ENCODE measurements at regions of chr1 and their contacts with region 1.

Region 1: DNA sequence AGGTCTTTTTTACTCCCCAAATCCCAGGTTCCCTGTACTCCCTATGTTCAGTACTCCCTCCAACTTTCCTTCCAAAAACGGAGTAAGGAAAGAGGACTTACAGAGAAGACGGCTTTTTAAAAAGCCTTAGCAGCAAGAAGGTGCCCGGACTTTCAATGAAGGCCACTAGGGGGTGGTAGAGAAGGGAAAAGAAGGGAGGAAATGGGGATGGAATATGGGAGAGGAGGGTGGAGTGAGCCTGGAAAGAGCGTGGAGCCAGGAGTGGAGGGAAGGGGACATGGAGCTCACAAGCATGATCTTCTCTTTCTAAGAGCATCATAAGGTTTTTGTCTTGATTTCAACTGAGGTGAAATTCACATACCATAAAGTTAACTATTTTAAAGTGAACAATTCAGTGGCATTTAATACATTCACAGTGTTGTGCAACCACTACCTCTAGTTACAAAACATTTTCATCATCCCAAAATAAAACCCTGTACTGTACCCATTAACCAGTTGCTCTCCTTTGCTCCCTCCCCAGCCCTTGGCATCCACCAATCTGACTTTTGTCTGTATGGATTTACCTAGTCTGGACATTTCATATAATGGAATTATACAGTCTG is 129.9 kb downstream of the ZNF281 start:
- DNase-seq: no peak
- H3K4me3 ChIP-seq: no peak overlapping the region
- H3K27ac ChIP-seq: no peak overlapping the region
- H3K4me1 ChIP-seq: no peaks in the 10 kb centered on the region
- H3K27me3 ChIP-seq: no peaks in the 10 kb centered on the region
- CTCF ChIP-seq: peak in 2 of 3 experiments; percentile 34 to 61
- POLR2A ChIP-seq: no peak

Region 2: DNA sequence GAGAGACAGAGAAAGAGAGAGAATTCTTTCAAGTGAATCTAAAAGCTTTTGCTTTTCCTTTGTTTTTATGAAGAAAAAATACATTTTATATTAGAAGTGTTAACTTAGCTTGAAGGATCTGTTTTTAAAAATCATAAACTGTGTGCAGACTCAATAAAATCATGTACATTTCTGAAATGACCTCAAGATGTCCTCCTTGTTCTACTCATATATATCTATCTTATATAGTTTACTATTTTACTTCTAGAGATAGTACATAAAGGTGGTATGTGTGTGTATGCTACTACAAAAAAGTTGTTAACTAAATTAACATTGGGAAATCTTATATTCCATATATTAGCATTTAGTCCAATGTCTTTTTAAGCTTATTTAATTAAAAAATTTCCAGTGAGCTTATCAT is 1523.4 kb before region 1 on chr1:
- intact Hi-C with region 1: loop called (anchors 5 kb)
- DNase-seq: no peak
- H3K4me3 ChIP-seq: no peak overlapping the region
- H3K27ac ChIP-seq: no peak overlapping the region
- H3K4me1 ChIP-seq: no peaks in the 10 kb centered on the region
- H3K27me3 ChIP-seq: no peaks in the 10 kb centered on the region
- CTCF ChIP-seq: peak in 1 of 3 experiments; percentile 17
- POLR2A ChIP-seq: no peak

Region 3: DNA sequence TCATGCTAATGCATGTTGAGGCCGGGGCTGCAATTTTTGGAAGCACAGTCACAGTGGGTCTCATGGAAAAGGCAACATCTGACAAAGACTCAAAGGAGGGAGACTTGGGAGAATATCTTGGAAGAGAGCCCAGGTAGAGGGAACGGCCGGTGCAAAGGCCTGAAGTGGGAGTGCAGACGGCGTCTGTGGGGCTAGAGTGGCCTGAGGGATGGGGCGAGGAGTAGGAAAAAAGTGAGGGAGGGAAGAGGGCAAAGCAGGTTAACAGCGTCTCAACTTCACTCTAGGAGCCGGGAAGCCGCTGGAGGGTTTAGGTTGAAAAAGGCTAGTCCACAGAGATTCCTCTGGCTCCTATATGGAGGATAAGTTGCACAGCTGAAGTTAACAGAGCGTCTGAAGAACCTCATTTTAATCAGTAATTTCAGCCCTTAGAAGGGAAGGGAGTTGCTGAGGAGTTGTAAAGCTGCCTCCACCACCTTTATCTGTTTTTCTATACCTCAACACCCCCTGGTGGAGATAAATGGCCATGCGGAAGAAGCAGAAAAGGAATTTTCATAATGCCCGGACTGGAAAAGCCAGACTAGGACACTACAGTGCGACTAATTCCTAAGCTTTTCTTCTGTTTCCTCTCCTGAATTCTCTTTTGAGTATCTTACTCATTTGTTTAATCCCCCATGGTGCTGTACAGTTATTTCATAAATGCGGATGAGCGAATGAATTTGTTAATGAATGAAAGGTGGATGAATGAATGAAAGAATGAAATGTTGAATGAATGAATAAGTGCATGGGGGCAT is 208.7 kb after region 1 on chr1:
- intact Hi-C with region 1: loop called (anchors 10 kb)
- DNase-seq: no peak
- H3K4me3 ChIP-seq: no peak overlapping the region
- H3K27ac ChIP-seq: no peak overlapping the region
- H3K4me1 ChIP-seq: no peaks in the 10 kb centered on the region
- H3K27me3 ChIP-seq: no peaks in the 10 kb centered on the region
- CTCF ChIP-seq: peak; percentile 60 to 76 (median 74)
- POLR2A ChIP-seq: no peak

Region 4: GRCh38 chr1:201320163-201320788 is 1040.4 kb after region 1 on chr1:
- intact Hi-C with region 1: no loop called
- DNase-seq: no peak
- H3K4me3 ChIP-seq: no peak overlapping the region
- H3K27ac ChIP-seq: no peak overlapping the region
- H3K4me1 ChIP-seq: peaks cover 4% of the 10 kb centered on the region
- H3K27me3 ChIP-seq: no peaks in the 10 kb centered on the region
- CTCF ChIP-seq: no peak
- POLR2A ChIP-seq: no peak